Activated CD4-positive, alpha-beta T cell treated with anti-CD3 and anti-CD28 coated beads for 36 hours (primary cell): ENCODE measurements at regions of chr4 and their contacts with region 1.

Region 1: DNA sequence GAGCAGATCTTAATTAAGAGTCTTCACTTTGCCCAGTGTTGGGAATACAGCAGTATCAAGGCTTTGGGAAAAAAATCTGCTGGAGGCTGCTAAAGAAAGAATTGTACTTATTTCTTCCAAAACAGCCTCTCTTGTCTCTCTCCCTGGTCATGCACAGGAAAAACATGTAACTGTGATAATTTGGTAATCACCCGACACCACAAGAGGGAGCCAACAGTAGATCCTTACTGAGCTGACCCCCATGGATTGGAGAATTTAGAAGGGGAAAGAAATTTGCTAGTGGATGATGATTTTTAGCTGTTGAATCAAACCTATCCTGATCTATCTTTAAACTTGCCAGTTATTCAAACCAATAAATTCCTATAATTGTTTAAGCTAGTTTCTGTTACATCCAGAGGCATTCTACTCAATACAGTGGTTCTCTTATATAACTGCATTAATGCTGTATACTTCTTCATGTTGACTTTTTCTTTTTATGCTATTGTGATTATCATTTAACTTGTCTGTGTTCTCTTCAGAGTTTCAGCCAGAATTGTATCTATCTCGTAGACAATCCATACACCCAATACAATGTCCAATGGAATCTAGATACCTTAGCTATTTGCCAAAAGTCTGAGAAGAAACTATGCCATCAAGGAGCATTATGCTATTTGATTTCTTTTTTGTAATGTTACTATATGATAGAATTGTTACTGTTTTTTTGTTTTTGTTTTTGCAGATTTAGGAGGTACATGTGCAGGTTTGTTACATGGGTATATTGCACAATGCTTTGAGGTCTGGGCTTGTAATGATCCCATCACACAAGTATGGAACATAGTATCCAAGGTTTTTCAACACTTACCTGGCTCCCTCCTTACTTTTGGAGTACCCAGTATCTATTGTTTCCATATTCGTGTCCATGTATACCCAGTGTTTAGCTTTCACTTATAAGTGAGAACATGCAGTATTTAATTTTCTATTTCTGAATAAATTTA is 31.3 kb upstream of the ARHGEF38 start:
- DNase-seq: peak; percentile 28
- ATAC-seq: no peak
- H3K4me3 Mint-ChIP-seq: no peak overlapping the region
- H3K27ac Mint-ChIP-seq: no peak overlapping the region
- H3K4me1 Mint-ChIP-seq: no peaks in the 10 kb centered on the region
- H3K27me3 Mint-ChIP-seq: peaks cover 11% of the 10 kb centered on the region

Region 2: DNA sequence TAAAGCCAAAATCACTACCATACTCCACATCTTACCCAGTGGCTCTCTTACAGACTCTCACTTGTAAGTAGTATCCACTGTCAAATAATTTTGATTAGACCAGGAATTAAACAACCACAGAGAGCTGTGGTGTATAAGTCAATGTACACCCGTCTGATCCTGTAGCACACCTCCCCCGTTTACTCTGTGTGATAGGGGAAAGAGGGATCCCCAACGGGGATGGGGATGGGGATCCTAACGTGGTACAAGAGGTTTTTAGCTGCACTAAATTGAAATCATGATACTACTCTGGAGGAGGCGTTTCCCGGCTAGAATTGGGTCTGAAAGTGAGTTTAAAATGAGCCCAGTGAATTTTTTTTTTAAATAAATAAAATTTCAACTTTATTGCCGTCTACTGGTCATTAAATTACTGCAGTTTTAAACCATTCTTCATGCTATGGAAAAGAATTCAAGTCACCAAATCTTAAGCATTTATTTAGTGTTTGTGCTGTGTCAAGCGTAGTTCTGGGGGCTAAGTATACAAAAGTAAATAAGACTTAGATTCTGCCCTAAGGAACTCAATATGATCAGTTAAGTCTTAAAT is 110.8 kb after region 1 on chr4:
- CTCF ChIA-PET with region 1: interaction called, 13 read pairs
- POLR2A ChIA-PET with region 1: no interaction called
- intact Hi-C with region 1: loop called in 1 of 2 experiments (anchors 2 kb)
- DNase-seq: no peak
- ATAC-seq: no peak
- H3K4me3 Mint-ChIP-seq: no peak overlapping the region
- H3K27ac Mint-ChIP-seq: no peak overlapping the region
- H3K4me1 Mint-ChIP-seq: no peaks in the 10 kb centered on the region
- H3K27me3 Mint-ChIP-seq: peaks cover 4% of the 10 kb centered on the region

Region 3: GRCh38 chr4:105715692-105716278 is 194.7 kb after region 1 on chr4:
- CTCF ChIA-PET with region 1: interaction called, 9 read pairs
- POLR2A ChIA-PET with region 1: no interaction called
- intact Hi-C with region 1: loop called in 1 of 2 experiments (anchors 5 kb)
- DNase-seq: no peak
- ATAC-seq: no peak
- H3K4me3 Mint-ChIP-seq: no peak overlapping the region
- H3K27ac Mint-ChIP-seq: no peak overlapping the region
- H3K4me1 Mint-ChIP-seq: peaks cover 11% of the 10 kb centered on the region
- H3K27me3 Mint-ChIP-seq: no peaks in the 10 kb centered on the region

Region 4: GRCh38 chr4:106201373-106201772 is 680.3 kb after region 1 on chr4:
- CTCF ChIA-PET with region 1: no interaction called
- POLR2A ChIA-PET with region 1: no interaction called
- intact Hi-C with region 1: loop called in 1 of 2 experiments (anchors 5 kb)
- DNase-seq: no peak
- ATAC-seq: no peak
- H3K4me3 Mint-ChIP-seq: no peak overlapping the region
- H3K27ac Mint-ChIP-seq: no peak overlapping the region
- H3K4me1 Mint-ChIP-seq: no peaks in the 10 kb centered on the region
- H3K27me3 Mint-ChIP-seq: no peaks in the 10 kb centered on the region